Mammary epithelial cell (primary cell): ENCODE measurements at regions of chr3 and their contacts with region 1.

Region 1: DNA sequence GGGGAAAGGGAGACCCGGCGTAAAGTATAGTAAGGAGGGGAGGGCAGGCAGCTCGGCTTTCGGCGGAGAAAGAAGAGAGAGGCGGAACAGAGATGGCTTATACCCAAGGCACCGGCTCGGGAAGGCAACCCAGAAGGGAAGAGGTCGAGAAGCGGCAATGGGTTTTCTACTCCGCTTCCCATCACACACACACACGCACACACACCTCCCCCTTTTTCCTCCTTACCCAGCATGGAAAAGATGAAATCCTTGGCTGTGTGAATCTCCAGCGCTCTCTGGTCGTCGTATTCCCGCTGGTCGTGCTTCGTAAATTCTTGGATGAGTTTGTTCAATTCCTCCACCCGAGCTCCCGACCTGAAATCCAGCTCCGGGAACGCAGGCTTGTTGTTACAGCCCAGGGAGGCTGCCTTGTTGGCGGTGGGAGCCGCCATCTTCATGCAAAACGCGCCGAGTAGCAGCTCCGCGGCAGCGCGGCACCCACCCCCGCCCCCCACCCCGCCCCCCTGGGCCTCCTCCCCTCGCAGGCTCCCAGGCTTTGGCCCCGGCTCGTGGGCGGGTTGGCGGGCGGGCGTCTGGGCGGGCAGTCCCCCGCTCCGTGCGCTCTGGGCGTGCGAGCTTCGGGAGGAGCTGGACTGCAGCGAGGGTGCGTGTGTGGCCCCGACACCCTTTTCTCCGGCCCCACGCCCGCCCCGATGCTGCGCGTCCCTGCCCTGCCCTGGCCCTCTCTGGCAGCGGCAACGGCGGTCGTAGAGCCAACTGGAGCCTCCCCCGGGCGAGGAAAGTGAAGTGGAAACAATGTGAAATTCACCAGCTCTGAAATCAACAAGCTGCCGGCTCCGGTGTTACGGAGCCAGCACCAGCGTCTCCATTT is at the start of gene MB21D2:
- DNase-seq: peak; percentile 80
- H3K4me3 ChIP-seq: peak within 1 kb of the TSS; percentile 90 to 97 (median 91)
- H3K27ac ChIP-seq: peak within 1 kb of the TSS; percentile 83
- H3K4me1 ChIP-seq: peaks cover 14% of the 10 kb centered on the region
- H3K27me3 ChIP-seq: no peaks in the 10 kb centered on the region
- CTCF ChIP-seq: no peak
- total RNA-seq, gene MB21D2: 5.2 to 7.8 TPM

Region 2: DNA sequence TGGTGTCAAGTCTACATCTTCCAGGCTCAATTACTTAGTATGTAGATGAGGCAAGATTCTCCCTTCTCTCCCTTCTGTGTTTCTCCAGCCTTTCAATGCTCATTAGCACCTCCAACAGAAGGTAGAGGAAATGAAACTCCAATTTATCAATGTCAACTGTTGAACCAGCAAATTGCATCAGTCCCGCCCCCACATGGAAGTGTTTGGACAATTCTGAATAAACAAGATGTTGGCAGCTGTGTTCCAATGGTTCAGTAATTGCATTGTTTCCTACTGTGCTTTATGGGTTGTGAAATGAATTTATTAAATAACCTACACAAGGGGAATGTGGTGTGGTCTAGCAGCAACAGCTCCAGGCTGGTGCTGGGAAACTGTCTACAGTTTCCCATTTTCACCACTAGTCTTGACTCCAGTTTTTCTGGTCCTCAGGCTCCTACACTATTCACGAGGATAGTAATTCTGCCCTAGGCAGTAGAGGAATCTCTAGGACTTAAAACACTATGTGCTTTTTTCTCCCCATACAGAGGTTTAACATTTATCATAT is 91.9 kb before region 1 on chr3:
- CTCF ChIA-PET with region 1: no interaction called
- dilution Hi-C with region 1: no loop called
- in situ Hi-C with region 1: loop called in 1 of 2 experiments (anchors 10 kb)
- intact Hi-C with region 1: no loop called
- DNase-seq: peak; percentile 60
- H3K4me3 ChIP-seq: no peak overlapping the region
- H3K27ac ChIP-seq: no peak overlapping the region
- H3K4me1 ChIP-seq: peaks cover 5% of the 10 kb centered on the region
- H3K27me3 ChIP-seq: no peaks in the 10 kb centered on the region
- CTCF ChIP-seq: peak; percentile 16 to 27

Region 3: GRCh38 chr3:192851821-192852424 is 65.7 kb before region 1 on chr3:
- CTCF ChIA-PET with region 1: no interaction called
- dilution Hi-C with region 1: no loop called
- in situ Hi-C with region 1: no loop called
- intact Hi-C with region 1: loop called (anchors 1 kb)
- DNase-seq: peak; percentile 93
- H3K4me3 ChIP-seq: no peak overlapping the region
- H3K27ac ChIP-seq: peak overlapping the region; percentile 90
- H3K4me1 ChIP-seq: peaks cover 27% of the 10 kb centered on the region
- H3K27me3 ChIP-seq: no peaks in the 10 kb centered on the region
- CTCF ChIP-seq: no peak

Region 4: GRCh38 chr3:192890347-192891335 is 27.0 kb before region 1 on chr3:
- CTCF ChIA-PET with region 1: interaction called, 13 read pairs
- dilution Hi-C with region 1: no loop called
- in situ Hi-C with region 1: no loop called
- intact Hi-C with region 1: no loop called
- DNase-seq: no peak
- H3K4me3 ChIP-seq: no peak overlapping the region
- H3K27ac ChIP-seq: no peak overlapping the region
- H3K4me1 ChIP-seq: peaks cover 46% of the 10 kb centered on the region
- H3K27me3 ChIP-seq: no peaks in the 10 kb centered on the region
- CTCF ChIP-seq: no peak

Region 5: GRCh38 chr3:193040836-193041672 is 123.4 kb after region 1 on chr3:
- CTCF ChIA-PET with region 1: no interaction called
- dilution Hi-C with region 1: no loop called
- in situ Hi-C with region 1: no loop called
- intact Hi-C with region 1: loop called (anchors 2 kb)
- DNase-seq: peak; percentile 56
- H3K4me3 ChIP-seq: no peak overlapping the region
- H3K27ac ChIP-seq: no peak overlapping the region
- H3K4me1 ChIP-seq: no peaks in the 10 kb centered on the region
- H3K27me3 ChIP-seq: no peaks in the 10 kb centered on the region
- CTCF ChIP-seq: peak; percentile 41 to 61